T-cell (primary cell): ENCODE measurements at regions of chr4 and their contacts with region 1.

Region 1: DNA sequence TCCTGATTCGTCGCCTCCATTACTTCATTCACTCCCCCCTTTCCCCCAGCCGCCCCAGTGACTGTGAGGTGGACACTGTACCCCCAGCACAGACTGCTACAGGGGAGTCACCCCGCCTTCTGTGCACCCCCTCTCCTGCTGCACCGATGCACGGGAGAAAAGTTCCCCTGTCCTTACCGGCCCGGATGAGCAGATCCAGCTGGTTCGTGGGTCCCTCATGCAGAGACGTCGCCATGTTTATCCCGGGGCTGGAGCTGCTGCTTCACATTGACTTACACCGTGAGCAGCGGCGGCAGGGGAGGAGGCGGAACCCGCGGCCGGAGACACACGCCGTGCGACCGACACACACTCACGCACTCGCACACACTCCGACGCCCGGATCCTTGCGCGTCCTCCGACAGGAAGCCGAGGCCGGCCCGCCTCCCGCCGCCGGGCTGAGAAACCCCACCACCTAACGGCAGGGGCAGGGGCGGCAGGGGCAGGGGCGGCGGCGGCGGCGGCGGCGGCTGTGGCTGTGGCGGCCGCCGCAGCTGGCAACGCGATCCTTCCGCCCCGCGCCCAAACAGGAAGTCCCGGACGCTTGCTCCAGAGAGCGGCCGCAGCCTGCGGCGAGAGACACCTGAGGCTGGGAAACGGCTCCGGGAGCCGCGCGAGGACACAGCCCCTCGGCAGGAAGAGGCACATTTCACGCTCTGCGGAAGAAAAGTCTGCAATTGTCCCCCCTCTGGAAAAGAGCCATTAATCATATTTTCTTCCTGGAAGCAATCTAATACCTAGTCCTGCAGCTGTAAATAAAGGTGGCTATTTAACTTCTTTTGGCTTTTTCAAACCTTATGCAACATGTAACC is 68.6 kb downstream of the NOCT start:
- DNase-seq: peak; percentile 66 to 90 (median 79)
- ATAC-seq: peak; percentile 56 to 68 (median 63)
- H3K4me3 ChIP-seq: peak overlapping the region; percentile 94 to 98
- H3K4me3 Mint-ChIP-seq: peak overlapping the region; percentile 88 to 99 (median 92)
- H3K27ac ChIP-seq: peak overlapping the region; percentile 93
- H3K27ac Mint-ChIP-seq: peak overlapping the region; percentile 98 to 100
- H3K4me1 ChIP-seq: peaks cover 2 to 22% of the 10 kb centered on the region in 2 experiments
- H3K4me1 Mint-ChIP-seq: peaks cover 40 to 49% (median 42%) of the 10 kb centered on the region in 3 donors
- H3K27me3 ChIP-seq: no peaks in the 10 kb centered on the region
- H3K27me3 Mint-ChIP-seq: no peaks in the 10 kb centered on the region

Region 2: GRCh38 chr4:139007640-139008039 is 76.5 kb before region 1 on chr4:
- CTCF ChIA-PET with region 1: no interaction called
- POLR2A ChIA-PET with region 1: interaction called in 1 of 2 experiments, 11 read pairs
- DNase-seq: no peak
- ATAC-seq: no peak
- H3K4me3 ChIP-seq: no peak overlapping the region
- H3K4me3 Mint-ChIP-seq: no peak overlapping the region
- H3K27ac ChIP-seq: no peak overlapping the region
- H3K27ac Mint-ChIP-seq: no peak overlapping the region
- H3K4me1 ChIP-seq: no peaks in the 10 kb centered on the region
- H3K4me1 Mint-ChIP-seq: no peaks in the 10 kb centered on the region
- H3K27me3 ChIP-seq: peaks cover 0 to 2% of the 10 kb centered on the region in 2 experiments
- H3K27me3 Mint-ChIP-seq: no peaks in the 10 kb centered on the region

Region 3: DNA sequence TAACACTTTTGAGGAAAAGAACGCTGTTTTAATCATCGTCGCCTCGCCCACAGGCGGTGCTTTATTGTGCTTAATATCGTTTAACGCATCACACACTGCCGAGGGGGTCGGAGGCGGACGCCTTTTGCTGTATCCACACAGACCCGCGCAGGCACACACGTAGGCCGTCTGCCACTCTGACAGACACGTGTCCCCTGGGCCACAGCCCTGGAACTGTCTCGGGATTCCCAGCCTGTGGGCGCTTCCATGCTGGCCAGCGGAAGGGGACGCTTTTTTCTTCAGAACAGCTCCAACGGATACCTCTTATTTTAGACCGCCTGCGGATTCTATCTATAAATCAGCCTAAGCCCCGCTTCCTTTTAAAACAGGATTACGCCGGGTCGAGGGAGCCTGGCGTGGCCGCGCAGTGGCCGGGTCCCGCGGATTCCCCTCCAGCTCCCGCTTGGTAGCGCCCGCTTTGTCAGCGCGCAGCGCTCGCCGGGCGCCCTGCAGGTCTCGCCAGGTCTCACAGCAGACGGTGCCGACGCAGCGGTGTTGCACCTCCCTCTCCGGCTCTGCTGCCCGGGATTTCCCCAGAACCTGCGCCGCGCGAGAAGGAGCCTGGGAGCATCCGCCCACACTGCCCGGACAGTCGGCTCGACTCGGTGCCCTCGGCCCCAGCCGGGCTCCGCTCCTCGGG is 68.8 kb before region 1 on chr4 and contains the start of gene NOCT:
- CTCF ChIA-PET with region 1: interaction called in 1 of 2 experiments, 3 read pairs
- POLR2A ChIA-PET with region 1: interaction called in 1 of 2 experiments, 15 read pairs
- DNase-seq: peak; percentile 72 to 96 (median 89)
- ATAC-seq: peak; percentile 91 to 97 (median 96)
- H3K4me3 ChIP-seq: peak within 1 kb of the TSS; percentile 68 to 71
- H3K4me3 Mint-ChIP-seq: peak within 1 kb of the TSS; percentile 82 to 94 (median 86)
- H3K27ac ChIP-seq: peak within 1 kb of the TSS; percentile 89
- H3K27ac Mint-ChIP-seq: peak within 1 kb of the TSS; percentile 92 to 96
- H3K4me1 ChIP-seq: peaks cover 10 to 16% of the 10 kb centered on the region in 2 experiments
- H3K4me1 Mint-ChIP-seq: peaks cover 19 to 26% (median 23%) of the 10 kb centered on the region in 3 donors
- H3K27me3 ChIP-seq: no peaks in the 10 kb centered on the region
- H3K27me3 Mint-ChIP-seq: no peaks in the 10 kb centered on the region
- total RNA-seq, gene NOCT: 2.4 to 19.3 (median 3.1) TPM

Region 4: GRCh38 chr4:139227729-139228404 is 143.7 kb after region 1 on chr4:
- CTCF ChIA-PET with region 1: interaction called, 3 to 11 read pairs
- POLR2A ChIA-PET with region 1: no interaction called
- DNase-seq: peak in 1 of 35 experiments; percentile 29
- ATAC-seq: peak in 3 of 4 experiments; percentile 34 to 53 (median 51)
- H3K4me3 ChIP-seq: no peak overlapping the region
- H3K4me3 Mint-ChIP-seq: no peak overlapping the region
- H3K27ac ChIP-seq: no peak overlapping the region
- H3K27ac Mint-ChIP-seq: no peak overlapping the region
- H3K4me1 ChIP-seq: no peaks in the 10 kb centered on the region
- H3K4me1 Mint-ChIP-seq: peaks cover 2 to 4% (median 4%) of the 10 kb centered on the region in 3 donors
- H3K27me3 ChIP-seq: no peaks in the 10 kb centered on the region
- H3K27me3 Mint-ChIP-seq: no peaks in the 10 kb centered on the region